GM12878 (cell line): ENCODE measurements at regions of chr4 and their contacts with region 1.

Region 1: GRCh38 chr4:155972098-155972497 is 18.4 kb upstream of the CTSO start:
- DNase-seq: peak; percentile 8
- ATAC-seq: peak; percentile 76
- H3K4me3 ChIP-seq: no peak overlapping the region
- H3K27ac ChIP-seq: no peak overlapping the region
- H3K4me1 ChIP-seq: peaks cover 11% of the 10 kb centered on the region
- H3K27me3 ChIP-seq: no peaks in the 10 kb centered on the region
- CTCF ChIP-seq: peak; percentile 41 to 49 (median 44); a peak in 5 of 6 replicates
- EP300 ChIP-seq: no peak
- POLR2A ChIP-seq: no peak
- RAD21 ChIP-seq: peak; percentile 68

Region 2: GRCh38 chr4:156201050-156201449 is 229.0 kb after region 1 on chr4:
- CTCF ChIA-PET with region 1: no interaction called
- POLR2A ChIA-PET with region 1: no interaction called
- RAD21 ChIA-PET with region 1: no interaction called
- SMC1A ChIA-PET with region 1: no interaction called
- in situ Hi-C with region 1: no loop called
- intact Hi-C with region 1: loop called (anchors 5 kb)
- DNase-seq: peak; percentile 17
- ATAC-seq: peak; percentile 89
- H3K4me3 ChIP-seq: no peak overlapping the region
- H3K27ac ChIP-seq: peak overlapping the region; percentile 57; the same call in 1 of the 2 replicates
- H3K4me1 ChIP-seq: peaks cover 13% of the 10 kb centered on the region
- H3K27me3 ChIP-seq: no peaks in the 10 kb centered on the region
- CTCF ChIP-seq: no peak
- EP300 ChIP-seq: peak; percentile 95 to 96
- POLR2A ChIP-seq: no peak
- RAD21 ChIP-seq: no peak